Lower leg skin (tissue), 4 donors: ENCODE measurements at regions of chr1 and their contacts with region 1.

Region 1: GRCh38 chr1:16078925-16079656 is 5.6 kb upstream of the FAM131C start:
- DNase-seq: peak; percentile 80 to 94
- H3K4me3 ChIP-seq: no peak overlapping the region
- CTCF ChIP-seq: peak in 2 of 3 donors; percentile 91 to 92
- POLR2A ChIP-seq: no peak

Region 2: GRCh38 chr1:16101623-16102022 is 22.5 kb after region 1 on chr1:
- intact Hi-C with region 1: no loop called
- DNase-seq: no peak
- H3K4me3 ChIP-seq: no peak overlapping the region
- CTCF ChIP-seq: no peak
- POLR2A ChIP-seq: no peak

Region 3: GRCh38 chr1:16187748-16188401 is 108.8 kb after region 1 on chr1:
- intact Hi-C with region 1: loop called (anchors 5 kb)
- DNase-seq: peak in 1 of 2 donors; percentile 95
- H3K4me3 ChIP-seq: no peak overlapping the region
- CTCF ChIP-seq: peak in 1 of 3 donors; percentile 91
- POLR2A ChIP-seq: no peak

Region 4: GRCh38 chr1:16243936-16244649 is 165.0 kb after region 1 on chr1:
- intact Hi-C with region 1: loop called (anchors 5 kb)
- DNase-seq: peak; percentile 85 to 95
- H3K4me3 ChIP-seq: no peak overlapping the region
- CTCF ChIP-seq: peak in 1 of 3 donors; percentile 83
- POLR2A ChIP-seq: no peak

Region 5: DNA sequence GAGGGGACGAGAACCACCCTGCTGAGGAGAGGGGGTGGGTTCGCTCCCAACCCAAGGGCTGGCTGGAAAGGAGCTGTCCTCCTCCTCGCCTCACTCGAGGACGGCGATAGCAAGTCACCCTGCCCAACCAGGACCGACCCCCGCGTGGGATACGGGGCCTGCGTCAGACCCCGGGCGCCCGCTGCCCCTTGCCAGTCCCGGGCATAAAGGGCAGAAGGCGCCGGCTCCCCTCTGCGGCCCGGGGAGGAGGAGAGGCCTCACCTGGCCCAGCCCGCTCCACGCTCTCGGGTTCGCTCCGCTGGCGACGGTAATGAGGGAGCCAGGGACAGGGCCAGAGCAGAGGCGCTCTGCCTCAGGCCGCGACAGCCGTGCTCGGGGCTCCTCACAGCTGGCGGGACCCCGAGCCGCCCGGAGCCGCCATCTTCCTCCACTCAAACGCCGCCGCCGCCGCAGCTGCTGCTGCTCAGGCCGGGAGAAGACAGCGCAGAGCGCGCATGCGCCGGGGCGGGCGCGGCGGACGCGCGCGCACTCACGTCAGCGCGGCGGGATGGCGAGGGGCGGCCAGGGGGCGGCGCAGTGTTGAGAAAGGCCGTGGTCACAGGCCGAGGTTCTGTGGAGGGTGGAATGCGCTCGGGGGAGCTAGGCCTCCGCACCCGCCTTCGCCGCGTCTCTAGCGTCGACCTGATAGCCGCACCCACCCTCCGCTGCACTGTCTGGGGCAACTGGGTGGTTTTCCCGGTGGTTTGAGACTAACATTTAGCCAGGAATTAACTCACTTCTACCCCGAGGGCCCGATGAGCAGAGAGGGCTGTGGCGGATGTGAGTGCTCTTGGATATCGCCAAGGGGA is 273.1 kb after region 1 on chr1 and contains the start of gene FBXO42:
- intact Hi-C with region 1: loop called (anchors 10 kb)
- DNase-seq: peak; percentile 82 to 97
- H3K4me3 ChIP-seq: peak within 1 kb of the TSS; percentile 97
- CTCF ChIP-seq: no peak
- POLR2A ChIP-seq: peak in 1 of 2 donors; percentile 59
- total RNA-seq, gene FBXO42: 40.1 to 68.3 (median 58.1) TPM